Psoas muscle (tissue), 8 donors: ENCODE measurements at regions of chr13 and their contacts with region 1.

Region 1: GRCh38 chr13:44197791-44198770 is 175.5 kb upstream of the SERP2 start:
- DNase-seq: no peak
- ATAC-seq: no peak
- H3K4me3 ChIP-seq: no peak overlapping the region
- H3K27ac ChIP-seq: no peak overlapping the region
- H3K4me1 ChIP-seq: peaks cover 19% of the 10 kb centered on the region
- H3K27me3 ChIP-seq: no peaks in the 10 kb centered on the region
- CTCF ChIP-seq: no peak

Region 2: DNA sequence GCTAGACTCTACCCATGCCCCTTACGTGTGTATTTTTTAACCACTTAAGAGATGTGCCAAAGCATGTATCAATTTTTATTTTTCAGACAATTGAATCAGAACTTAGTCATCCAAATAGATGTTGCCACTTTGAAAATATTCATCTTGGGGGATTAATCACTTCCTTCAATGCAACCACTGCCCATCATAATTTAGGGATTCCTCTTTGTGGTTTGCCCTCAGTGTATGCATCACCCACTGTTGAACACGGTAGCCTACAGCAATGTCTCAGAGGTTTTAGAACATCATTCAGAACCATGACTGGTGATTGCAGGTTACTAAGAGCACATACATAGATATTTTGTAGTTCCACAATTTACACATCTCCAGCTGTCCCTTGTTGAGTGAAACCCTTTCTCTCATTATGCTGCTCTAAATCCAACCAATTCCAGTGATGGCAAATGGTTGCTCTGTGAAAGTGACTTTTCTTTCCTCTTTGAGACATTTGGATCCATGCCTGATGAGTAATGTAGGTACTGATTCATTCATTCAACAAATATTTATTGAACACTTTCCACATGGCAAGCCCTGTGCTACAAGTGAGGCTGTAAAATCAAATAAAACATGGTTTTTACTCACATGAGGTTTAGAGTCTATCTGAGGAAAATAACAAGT is 114.9 kb after region 1 on chr13:
- intact Hi-C with region 1: loop called in 1 of 2 experiments (anchors 5 kb)
- DNase-seq: no peak
- ATAC-seq: no peak
- H3K4me3 ChIP-seq: no peak overlapping the region
- H3K27ac ChIP-seq: no peak overlapping the region
- H3K4me1 ChIP-seq: peaks cover 17% of the 10 kb centered on the region
- H3K27me3 ChIP-seq: no peaks in the 10 kb centered on the region
- CTCF ChIP-seq: no peak